AG04450 (cell line): ENCODE measurements at regions of chr1 and their contacts with region 1.

Region 1: GRCh38 chr1:89085781-89086180 is 20.8 kb upstream of the GBP1 start:
- DNase-seq: no peak
- H3K4me3 ChIP-seq: no peak overlapping the region
- H3K27ac ChIP-seq: no peak overlapping the region
- H3K27me3 ChIP-seq: peaks cover 2% of the 10 kb centered on the region
- CTCF ChIP-seq: peak; percentile 75

Region 2: GRCh38 chr1:88646476-88647248 is 439.1 kb before region 1 on chr1:
- CTCF ChIA-PET with region 1: no interaction called
- POLR2A ChIA-PET with region 1: no interaction called
- DNase-seq: no peak
- H3K4me3 ChIP-seq: no peak overlapping the region
- H3K27ac ChIP-seq: no peak overlapping the region
- H3K27me3 ChIP-seq: no peaks in the 10 kb centered on the region
- CTCF ChIP-seq: no peak

Region 3: GRCh38 chr1:88998716-88999115 is 87.1 kb before region 1 on chr1:
- CTCF ChIA-PET with region 1: interaction called, 14 read pairs
- POLR2A ChIA-PET with region 1: no interaction called
- DNase-seq: no peak
- H3K4me3 ChIP-seq: no peak overlapping the region
- H3K27ac ChIP-seq: no peak overlapping the region
- H3K27me3 ChIP-seq: no peaks in the 10 kb centered on the region
- CTCF ChIP-seq: peak; percentile 47

Region 4: GRCh38 chr1:89065079-89065868 is 20.5 kb before region 1 on chr1 and contains the start of gene GBP1:
- CTCF ChIA-PET with region 1: interaction called, 14 read pairs
- POLR2A ChIA-PET with region 1: no interaction called
- DNase-seq: peak; percentile 78
- H3K4me3 ChIP-seq: peak within 1 kb of the TSS; percentile 77
- H3K27ac ChIP-seq: peak within 1 kb of the TSS; percentile 95
- H3K27me3 ChIP-seq: no peaks in the 10 kb centered on the region
- CTCF ChIP-seq: no peak
- polyA plus RNA-seq, gene GBP1: 86.2 and 103 TPM in 2 replicates

Region 5: DNA sequence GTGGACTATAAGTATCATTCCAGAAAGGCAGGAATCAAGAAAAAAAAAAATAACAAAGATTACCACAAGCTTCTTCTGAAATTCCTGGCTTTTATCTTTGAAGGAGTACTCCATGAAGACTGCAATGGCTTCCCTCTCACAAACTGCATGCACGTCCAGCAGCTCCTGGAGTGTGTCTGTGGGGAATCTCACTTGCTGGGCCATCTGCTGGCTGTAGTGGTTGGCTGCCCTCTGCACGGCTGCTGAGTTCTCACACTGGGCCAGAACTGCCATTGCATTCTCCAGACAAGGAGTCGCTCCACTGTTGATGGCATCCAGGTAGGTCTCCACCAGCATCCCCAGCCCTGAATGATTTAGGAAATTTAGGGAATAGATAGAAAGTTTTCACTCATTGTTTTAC is 63.4 kb after region 1 on chr1:
- CTCF ChIA-PET with region 1: interaction called, 36 read pairs
- POLR2A ChIA-PET with region 1: no interaction called
- DNase-seq: peak; percentile 8
- H3K4me3 ChIP-seq: no peak overlapping the region
- H3K27ac ChIP-seq: no peak overlapping the region
- H3K27me3 ChIP-seq: peaks cover 3% of the 10 kb centered on the region
- CTCF ChIP-seq: peak; percentile 60

Region 6: GRCh38 chr1:89358287-89358893 is 272.6 kb after region 1 on chr1:
- CTCF ChIA-PET with region 1: interaction called, 43 read pairs
- POLR2A ChIA-PET with region 1: no interaction called
- DNase-seq: peak; percentile 36
- H3K4me3 ChIP-seq: no peak overlapping the region
- H3K27ac ChIP-seq: no peak overlapping the region
- H3K27me3 ChIP-seq: no peaks in the 10 kb centered on the region
- CTCF ChIP-seq: peak; percentile 77

Region 7: GRCh38 chr1:89454845-89455521 is 369.2 kb after region 1 on chr1:
- CTCF ChIA-PET with region 1: interaction called, 12 read pairs
- POLR2A ChIA-PET with region 1: no interaction called
- DNase-seq: no peak
- H3K4me3 ChIP-seq: no peak overlapping the region
- H3K27ac ChIP-seq: no peak overlapping the region
- H3K27me3 ChIP-seq: no peaks in the 10 kb centered on the region
- CTCF ChIP-seq: peak; percentile 71